WTC11 (cell line): ENCODE measurements at regions of chr6 and their contacts with region 1.

Region 1: DNA sequence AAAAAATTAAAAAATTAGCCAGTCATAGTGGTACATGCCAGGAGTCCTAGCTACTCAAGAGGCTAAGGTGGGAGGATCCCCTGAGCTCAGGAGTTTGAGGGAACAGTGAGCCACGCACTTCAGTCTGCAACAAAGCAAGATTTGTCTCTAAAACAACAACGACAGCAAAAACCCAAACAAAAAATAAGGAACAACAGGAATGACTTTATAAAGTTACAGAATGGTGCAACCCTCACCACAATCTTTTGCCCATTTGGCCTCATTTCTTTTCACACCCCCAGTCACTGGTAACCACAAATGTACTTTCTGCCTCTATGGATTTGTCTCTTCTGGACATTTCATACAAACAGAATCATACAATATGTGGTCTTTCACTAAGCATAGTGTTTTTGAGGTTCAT is 16.7 kb upstream of the ZFAND3 start:
- DNase-seq: no peak
- ATAC-seq: no peak
- H3K4me3 Mint-ChIP-seq: no peak overlapping the region
- H3K27ac Mint-ChIP-seq: no peak overlapping the region
- H3K4me1 Mint-ChIP-seq: peaks cover 8% of the 10 kb centered on the region
- H3K27me3 Mint-ChIP-seq: peaks cover 7% of the 10 kb centered on the region; the same call in 1 of the 2 replicates
- CTCF ChIP-seq: no peak

Region 2: DNA sequence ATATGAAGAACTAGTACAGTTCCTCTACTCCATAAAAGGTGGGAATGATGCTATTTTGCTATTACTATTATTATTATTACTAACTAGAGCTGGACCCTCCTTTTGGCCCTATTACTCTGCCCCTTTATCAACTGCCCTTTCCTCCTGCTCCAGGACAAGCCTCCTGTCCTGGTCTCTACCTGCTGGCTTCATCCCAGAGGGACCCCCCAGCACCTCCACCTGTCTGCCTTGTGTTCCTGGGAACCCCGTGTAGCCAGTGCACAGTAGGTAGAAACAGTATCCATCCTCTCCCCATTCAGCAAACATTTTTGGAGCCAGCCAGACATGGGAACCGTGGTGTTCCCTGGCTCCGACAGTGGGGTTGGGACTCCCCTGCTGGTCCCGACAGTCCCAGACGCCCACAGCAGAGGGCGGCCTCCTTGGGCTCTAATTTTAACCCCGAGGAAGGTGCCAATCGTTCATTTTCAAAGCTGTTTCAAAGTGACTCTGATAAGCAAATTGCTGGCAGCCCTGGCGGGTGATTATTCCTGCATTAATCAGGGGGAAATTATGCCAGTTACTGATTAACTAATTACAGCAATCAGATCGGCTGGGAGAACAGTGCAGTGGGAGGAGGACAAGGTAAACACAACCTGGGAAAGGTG is 60.9 kb before region 1 on chr6:
- CTCF ChIA-PET with region 1: no interaction called
- POLR2A ChIA-PET with region 1: no interaction called
- DNase-seq: peak; percentile 64
- ATAC-seq: peak; percentile 89
- H3K4me3 Mint-ChIP-seq: 0 out of 2 replicates have a peak overlapping the region, but pooled peaks have one; percentile 14
- H3K27ac Mint-ChIP-seq: no peak overlapping the region
- H3K4me1 Mint-ChIP-seq: peaks cover 8% of the 10 kb centered on the region
- H3K27me3 Mint-ChIP-seq: peaks cover 76% of the 10 kb centered on the region
- CTCF ChIP-seq: peak; percentile 26; the same call in 1 of the 2 replicates

Region 3: DNA sequence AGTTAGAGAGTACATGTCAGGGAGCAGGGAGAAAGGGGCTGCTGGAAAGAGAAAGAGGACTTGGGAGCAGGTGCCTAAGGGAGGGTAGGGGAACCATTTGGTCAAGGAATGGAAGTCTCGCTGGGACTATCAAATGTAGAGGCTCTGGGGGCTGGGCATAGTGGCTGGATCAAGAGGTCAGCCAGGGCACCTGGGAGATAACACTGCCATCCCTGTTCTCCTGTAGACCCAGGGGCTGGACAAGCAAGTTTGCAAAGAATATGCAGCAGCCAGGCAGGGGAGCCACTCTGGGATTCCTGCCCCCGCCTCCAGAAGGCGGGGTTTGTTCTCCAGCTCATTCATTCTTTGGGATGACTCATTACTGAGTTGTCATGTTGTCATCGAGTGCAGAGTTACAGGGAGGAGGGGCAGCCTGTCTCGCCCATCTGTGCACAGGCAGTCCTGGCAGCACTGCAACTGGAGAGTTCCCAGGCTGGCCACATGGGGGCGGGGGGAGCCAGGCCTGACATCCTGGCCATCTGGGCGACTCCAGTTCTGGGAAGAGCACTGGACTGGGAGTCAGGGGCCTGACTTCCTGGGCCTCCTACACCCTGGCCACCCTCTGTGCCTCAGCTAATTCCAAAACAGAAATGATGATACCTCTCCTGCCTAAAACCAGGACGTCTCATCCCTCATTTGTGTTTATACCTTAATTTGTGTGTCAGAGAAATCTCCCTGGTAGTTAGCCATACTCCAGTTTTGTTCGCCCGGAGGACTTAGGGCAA is 11.5 kb before region 1 on chr6:
- CTCF ChIA-PET with region 1: interaction called, 14 read pairs
- POLR2A ChIA-PET with region 1: no interaction called
- DNase-seq: peak; percentile 90
- ATAC-seq: peak; percentile 99
- H3K4me3 Mint-ChIP-seq: no peak overlapping the region; the same call in 1 of the 2 replicates
- H3K27ac Mint-ChIP-seq: peak overlapping the region; percentile 72
- H3K4me1 Mint-ChIP-seq: peaks cover 29% of the 10 kb centered on the region
- H3K27me3 Mint-ChIP-seq: peaks cover 2% of the 10 kb centered on the region
- CTCF ChIP-seq: peak; percentile 86